BJ (cell line): ENCODE measurements at regions of chr17 and their contacts with region 1.

Region 1: DNA sequence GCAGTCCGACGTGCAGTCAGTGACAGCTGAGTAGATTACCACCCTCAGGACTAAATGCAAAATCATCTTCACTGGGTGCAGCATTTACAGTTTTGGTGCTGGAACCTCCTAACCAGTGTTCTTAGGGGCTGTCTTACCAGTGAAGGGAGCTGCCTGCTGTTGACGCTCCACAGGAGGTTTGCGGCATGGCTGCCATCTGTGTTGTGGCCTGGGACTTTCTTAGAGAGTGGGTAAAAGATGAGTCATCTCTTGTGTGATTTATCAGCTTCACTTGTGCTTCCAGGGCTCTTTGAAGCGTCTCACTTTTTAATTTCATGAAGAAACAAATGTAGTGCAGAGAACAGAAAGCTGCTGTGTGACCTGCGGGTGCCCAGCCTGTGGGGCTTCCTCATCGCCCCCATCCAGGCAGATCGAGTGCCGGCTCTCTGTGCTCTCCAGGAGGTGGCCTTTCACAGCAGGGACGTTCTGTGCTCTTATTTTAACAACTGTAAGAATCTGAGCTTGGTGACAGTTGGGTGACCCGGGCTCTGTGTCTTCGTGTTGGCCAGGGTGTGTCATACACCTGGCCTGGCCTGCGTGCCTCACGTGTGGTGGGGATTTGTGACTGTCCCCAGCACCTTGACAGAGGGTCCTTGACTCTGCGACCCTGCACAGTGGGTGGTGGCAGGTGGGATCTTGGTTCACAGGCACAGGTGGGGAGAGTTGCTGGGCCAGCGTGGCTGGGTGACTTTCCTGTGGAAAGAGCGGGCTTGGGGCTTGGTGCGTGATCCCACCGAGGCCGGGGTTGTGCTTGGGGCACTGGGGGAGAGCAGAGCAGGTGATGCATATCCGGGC is 24.3 kb upstream of the ZNF750 start:
- DNase-seq: peak; percentile 66
- H3K4me3 ChIP-seq: no peak overlapping the region
- H3K27me3 ChIP-seq: no peaks in the 10 kb centered on the region
- CTCF ChIP-seq: no peak

Region 2: GRCh38 chr17:82170412-82170961 is 693.7 kb before region 1 on chr17:
- CTCF ChIA-PET with region 1: no interaction called
- POLR2A ChIA-PET with region 1: no interaction called
- DNase-seq: no peak
- H3K4me3 ChIP-seq: no peak overlapping the region
- H3K27me3 ChIP-seq: no peaks in the 10 kb centered on the region
- CTCF ChIP-seq: no peak

Region 3: DNA sequence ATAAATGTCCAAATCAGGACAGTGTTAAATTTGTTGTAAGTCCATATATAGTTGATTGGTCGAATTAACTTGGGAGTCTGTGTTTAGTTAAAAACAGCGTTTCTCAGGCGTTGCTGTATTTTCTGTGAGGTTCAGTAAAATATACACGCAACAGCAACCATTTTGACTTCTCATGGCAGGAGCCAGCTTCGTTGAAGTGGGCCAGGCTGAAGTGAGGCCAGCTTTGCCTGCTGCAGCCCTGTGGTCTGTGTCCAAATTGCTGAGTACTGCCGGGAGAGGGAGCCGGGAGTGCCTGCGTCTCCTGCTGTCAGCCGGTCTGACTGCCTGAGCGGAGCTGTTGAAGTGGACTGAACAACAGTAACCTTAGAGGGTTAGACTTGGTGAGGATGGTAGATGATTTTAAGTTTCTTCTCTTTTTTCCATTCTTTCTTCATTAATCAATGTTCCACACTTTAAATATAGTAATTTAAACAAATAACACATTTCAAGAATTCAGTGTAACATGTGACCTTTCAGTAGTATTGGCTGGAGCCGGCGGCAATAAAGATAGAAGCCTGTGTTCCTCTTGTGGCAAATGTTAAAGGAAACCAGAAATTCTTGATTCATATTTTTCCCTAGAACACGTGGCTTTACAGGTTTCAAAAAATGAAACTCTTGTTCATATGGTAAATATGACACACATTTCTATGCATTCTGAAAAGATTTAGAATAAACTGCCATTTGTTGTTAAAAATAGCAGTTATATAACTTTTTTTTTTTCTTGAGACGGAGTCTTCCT is 12.6 kb after region 1 on chr17:
- CTCF ChIA-PET with region 1: interaction called, 12 read pairs
- POLR2A ChIA-PET with region 1: no interaction called
- DNase-seq: no peak
- H3K4me3 ChIP-seq: no peak overlapping the region
- H3K27me3 ChIP-seq: no peaks in the 10 kb centered on the region
- CTCF ChIP-seq: peak; percentile 76

Region 4: GRCh38 chr17:82962864-82963684 is 98.9 kb after region 1 on chr17:
- CTCF ChIA-PET with region 1: no interaction called
- POLR2A ChIA-PET with region 1: no interaction called
- DNase-seq: peak; percentile 35
- H3K4me3 ChIP-seq: peak overlapping the region; percentile 10; the same call in 1 of the 2 replicates
- H3K27me3 ChIP-seq: no peaks in the 10 kb centered on the region
- CTCF ChIP-seq: peak; percentile 91

Region 5: DNA sequence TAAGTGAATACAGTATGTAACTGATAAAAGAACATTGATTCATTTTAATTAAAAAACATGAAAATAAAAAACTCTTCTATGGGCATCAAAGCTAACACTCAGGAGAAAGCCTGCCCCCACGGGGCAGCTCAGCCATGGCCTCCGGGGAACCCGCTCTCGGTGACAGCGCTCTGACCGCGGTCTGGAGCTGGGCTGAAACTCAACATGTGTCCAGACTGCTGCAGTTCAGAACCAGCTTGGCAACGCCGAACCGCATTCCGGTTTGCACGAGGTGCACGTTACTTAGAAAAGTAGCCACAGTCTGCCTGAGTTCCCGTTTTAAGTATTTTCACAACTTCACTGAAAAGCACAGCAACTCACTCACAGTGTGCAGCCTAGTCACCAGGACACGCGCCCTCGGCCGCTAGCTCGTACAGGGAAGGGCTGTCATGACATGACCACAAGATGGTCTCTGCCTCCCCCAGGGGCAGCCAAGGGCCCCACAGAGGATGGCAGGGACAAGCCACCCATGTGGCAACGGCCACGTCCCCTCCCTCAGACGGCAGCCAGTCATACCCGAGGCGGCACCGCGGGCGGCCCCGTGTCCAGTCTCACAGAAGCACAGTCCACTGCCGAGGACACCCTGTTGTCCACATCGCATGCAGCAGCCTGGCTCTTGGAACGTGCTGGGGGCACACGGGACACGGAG is 138.1 kb after region 1 on chr17:
- CTCF ChIA-PET with region 1: no interaction called
- POLR2A ChIA-PET with region 1: no interaction called
- DNase-seq: no peak
- H3K4me3 ChIP-seq: no peak overlapping the region
- H3K27me3 ChIP-seq: no peaks in the 10 kb centered on the region
- CTCF ChIP-seq: no peak